Activated CD8-positive, alpha-beta T cell treated with anti-CD3 and anti-CD28 coated beads for 36 hours (primary cell): ENCODE measurements at regions of chr10 and their contacts with region 1.

Region 1: DNA sequence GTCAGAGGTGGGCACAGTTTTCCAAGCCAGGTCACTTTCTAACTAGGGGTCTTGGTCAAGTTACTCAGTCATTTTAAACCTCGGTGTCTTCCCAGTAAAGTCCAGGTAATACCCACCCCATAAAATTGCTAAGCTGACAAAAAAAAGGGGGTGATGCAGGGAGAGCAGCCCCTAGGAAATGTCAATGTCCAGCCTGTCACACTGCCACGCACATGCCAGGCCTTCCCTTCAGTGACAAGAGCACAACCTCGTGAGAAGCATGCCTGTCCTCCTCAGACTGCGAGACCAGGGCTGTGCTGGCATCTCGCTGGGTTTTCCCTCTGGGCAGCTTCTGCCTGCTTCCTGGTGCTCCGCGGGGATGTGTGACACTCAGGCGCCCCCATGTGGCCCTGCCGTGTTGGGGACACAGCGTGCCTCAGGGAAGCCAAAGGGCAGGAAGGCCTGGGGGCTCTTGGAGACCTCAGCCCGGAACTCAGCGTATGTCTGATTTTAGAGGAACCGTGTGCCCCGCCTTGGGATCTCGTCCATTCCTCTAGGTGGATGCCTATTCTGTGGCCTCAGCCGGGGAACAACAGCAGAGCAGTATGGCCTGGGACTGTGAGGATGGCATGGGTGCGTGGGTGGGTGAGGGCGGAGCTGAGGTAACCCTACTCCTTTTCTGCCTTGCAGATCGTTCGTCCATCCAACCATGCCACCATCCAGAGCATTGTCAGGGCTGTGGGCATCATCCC is 10.2 kb upstream of the GDF2 start:
- DNase-seq: peak; percentile 92
- ATAC-seq: peak; percentile 90
- H3K4me3 Mint-ChIP-seq: no peak overlapping the region
- H3K27ac Mint-ChIP-seq: peak overlapping the region; percentile 72
- H3K4me1 Mint-ChIP-seq: peaks cover 20% of the 10 kb centered on the region
- H3K27me3 Mint-ChIP-seq: no peaks in the 10 kb centered on the region
- CTCF ChIP-seq: peak; percentile 97

Region 2: GRCh38 chr10:47030191-47030703 is 281.9 kb before region 1 on chr10:
- CTCF ChIA-PET with region 1: interaction called, 56 read pairs
- POLR2A ChIA-PET with region 1: no interaction called
- intact Hi-C with region 1: loop called (anchors 2 kb)
- DNase-seq: no peak
- ATAC-seq: no peak
- H3K4me3 Mint-ChIP-seq: no peak overlapping the region
- H3K27ac Mint-ChIP-seq: no peak overlapping the region
- H3K4me1 Mint-ChIP-seq: no peaks in the 10 kb centered on the region
- H3K27me3 Mint-ChIP-seq: no peaks in the 10 kb centered on the region
- CTCF ChIP-seq: no peak

Region 3: GRCh38 chr10:47253651-47254375 is 58.3 kb before region 1 on chr10:
- CTCF ChIA-PET with region 1: interaction called, 10 read pairs
- POLR2A ChIA-PET with region 1: no interaction called
- intact Hi-C with region 1: no loop called
- DNase-seq: no peak
- ATAC-seq: no peak
- H3K4me3 Mint-ChIP-seq: no peak overlapping the region
- H3K27ac Mint-ChIP-seq: no peak overlapping the region
- H3K4me1 Mint-ChIP-seq: peaks cover 44% of the 10 kb centered on the region
- H3K27me3 Mint-ChIP-seq: no peaks in the 10 kb centered on the region
- CTCF ChIP-seq: no peak

Region 4: GRCh38 chr10:47300429-47300931 is 11.6 kb before region 1 on chr10:
- CTCF ChIA-PET with region 1: interaction called, 13 read pairs
- POLR2A ChIA-PET with region 1: no interaction called
- intact Hi-C with region 1: no loop called
- DNase-seq: no peak
- ATAC-seq: peak; percentile 20
- H3K4me3 Mint-ChIP-seq: peak overlapping the region; percentile 76
- H3K27ac Mint-ChIP-seq: no peak overlapping the region
- H3K4me1 Mint-ChIP-seq: peaks cover 15% of the 10 kb centered on the region
- H3K27me3 Mint-ChIP-seq: peaks cover 7% of the 10 kb centered on the region
- CTCF ChIP-seq: no peak